ENCODE measurements at regions of chr14 and their contacts with region 1.

Region 1: DNA sequence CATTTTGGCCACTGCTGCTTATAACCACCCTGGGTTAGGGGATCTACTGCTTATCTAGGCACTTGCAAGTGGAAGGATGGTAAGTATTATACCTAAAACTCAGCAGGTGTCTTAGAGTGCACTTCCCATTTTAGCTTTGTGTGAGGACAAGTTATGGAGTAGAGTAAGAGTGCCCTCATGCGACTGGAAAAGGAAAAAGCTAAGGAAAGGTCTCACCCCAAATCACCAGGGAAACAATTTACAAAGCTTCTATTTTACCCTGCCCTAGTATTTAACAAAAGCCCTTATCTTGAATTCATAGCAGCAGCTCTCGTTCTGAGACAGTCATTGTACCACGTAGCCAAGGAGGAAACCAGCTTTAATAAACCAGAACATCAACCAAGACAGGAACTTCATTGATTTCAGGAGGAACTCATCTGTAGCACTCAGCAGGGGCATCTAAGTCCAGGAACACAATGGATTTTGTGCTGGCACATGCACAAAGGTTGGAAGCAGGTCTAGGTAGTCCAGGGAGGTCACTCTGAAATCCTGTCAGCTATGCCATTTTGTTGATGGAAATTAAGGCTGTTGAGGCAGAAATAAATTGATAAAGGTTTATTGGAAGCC is 2.9 kb downstream of the RDH12 start:
- H3K4me3 ChIP-seq: no peak overlapping the region
- H3K27ac ChIP-seq: no peak overlapping the region
- H3K4me1 ChIP-seq: no peaks in the 10 kb centered on the region
- CTCF ChIP-seq: peak; percentile 54

Region 2: GRCh38 chr14:67426983-67427606 is 277.5 kb before region 1 on chr14:
- CTCF ChIA-PET with region 1: interaction called, 72 read pairs
- POLR2A ChIA-PET with region 1: interaction called, 4 read pairs
- H3K4me3 ChIP-seq: no peak overlapping the region
- H3K27ac ChIP-seq: no peak overlapping the region
- H3K4me1 ChIP-seq: no peaks in the 10 kb centered on the region
- CTCF ChIP-seq: peak; percentile 60

Region 3: GRCh38 chr14:67583711-67584644 is 120.6 kb before region 1 on chr14:
- CTCF ChIA-PET with region 1: interaction called, 131 read pairs
- POLR2A ChIA-PET with region 1: interaction called, 3 read pairs
- H3K4me3 ChIP-seq: no peak overlapping the region
- H3K27ac ChIP-seq: no peak overlapping the region
- H3K4me1 ChIP-seq: no peaks in the 10 kb centered on the region
- CTCF ChIP-seq: peak; percentile 77

Region 4: GRCh38 chr14:67610491-67610890 is 94.1 kb before region 1 on chr14:
- CTCF ChIA-PET with region 1: interaction called, 13 read pairs
- POLR2A ChIA-PET with region 1: no interaction called
- H3K4me3 ChIP-seq: no peak overlapping the region
- H3K27ac ChIP-seq: no peak overlapping the region
- H3K4me1 ChIP-seq: no peaks in the 10 kb centered on the region
- CTCF ChIP-seq: no peak

Region 5: GRCh38 chr14:67666750-67667449 is 37.7 kb before region 1 on chr14:
- CTCF ChIA-PET with region 1: interaction called, 31 read pairs
- POLR2A ChIA-PET with region 1: no interaction called
- H3K4me3 ChIP-seq: no peak overlapping the region
- H3K27ac ChIP-seq: no peak overlapping the region
- H3K4me1 ChIP-seq: peaks cover 5% of the 10 kb centered on the region; the same call in 1 of the 2 replicates
- CTCF ChIP-seq: peak; percentile 11; the same call in 1 of the 2 replicates

Region 6: DNA sequence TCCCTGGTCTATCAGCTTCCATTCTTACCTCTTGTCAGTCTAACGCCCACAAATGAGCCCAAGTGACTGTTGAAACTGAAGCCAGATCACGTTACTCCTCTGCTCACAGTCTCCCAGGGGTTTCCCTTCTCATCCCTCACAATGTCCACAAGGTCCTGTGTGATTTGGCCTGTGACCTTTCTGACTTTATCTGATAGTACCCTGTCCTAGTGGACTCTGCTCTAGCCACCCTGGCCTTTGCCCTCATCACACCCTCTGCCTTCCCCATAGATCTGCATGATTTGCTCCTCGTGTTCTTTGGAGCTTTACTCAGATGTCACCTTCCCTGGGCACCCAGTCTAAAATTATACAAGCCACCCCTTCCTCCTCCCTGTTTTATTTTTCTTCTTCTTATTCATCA is 52.6 kb after region 1 on chr14:
- CTCF ChIA-PET with region 1: no interaction called
- POLR2A ChIA-PET with region 1: no interaction called
- H3K4me3 ChIP-seq: no peak overlapping the region
- H3K27ac ChIP-seq: no peak overlapping the region
- H3K4me1 ChIP-seq: no peaks in the 10 kb centered on the region
- CTCF ChIP-seq: no peak